AG04449 (cell line): ENCODE measurements at regions of chr2 and their contacts with region 1.

Region 1: GRCh38 chr2:190088917-190089316 is 26.4 kb upstream of the MSTN start:
- DNase-seq: peak; percentile 5
- H3K4me3 ChIP-seq: no peak overlapping the region
- CTCF ChIP-seq: peak; percentile 48

Region 2: GRCh38 chr2:189549449-189549832 is 539.5 kb before region 1 on chr2:
- CTCF ChIA-PET with region 1: no interaction called
- POLR2A ChIA-PET with region 1: no interaction called
- DNase-seq: no peak
- H3K4me3 ChIP-seq: no peak overlapping the region
- CTCF ChIP-seq: no peak

Region 3: GRCh38 chr2:190272457-190272842 is 183.5 kb after region 1 on chr2:
- CTCF ChIA-PET with region 1: interaction called, 48 read pairs
- POLR2A ChIA-PET with region 1: no interaction called
- DNase-seq: no peak
- H3K4me3 ChIP-seq: no peak overlapping the region
- CTCF ChIP-seq: no peak

Region 4: DNA sequence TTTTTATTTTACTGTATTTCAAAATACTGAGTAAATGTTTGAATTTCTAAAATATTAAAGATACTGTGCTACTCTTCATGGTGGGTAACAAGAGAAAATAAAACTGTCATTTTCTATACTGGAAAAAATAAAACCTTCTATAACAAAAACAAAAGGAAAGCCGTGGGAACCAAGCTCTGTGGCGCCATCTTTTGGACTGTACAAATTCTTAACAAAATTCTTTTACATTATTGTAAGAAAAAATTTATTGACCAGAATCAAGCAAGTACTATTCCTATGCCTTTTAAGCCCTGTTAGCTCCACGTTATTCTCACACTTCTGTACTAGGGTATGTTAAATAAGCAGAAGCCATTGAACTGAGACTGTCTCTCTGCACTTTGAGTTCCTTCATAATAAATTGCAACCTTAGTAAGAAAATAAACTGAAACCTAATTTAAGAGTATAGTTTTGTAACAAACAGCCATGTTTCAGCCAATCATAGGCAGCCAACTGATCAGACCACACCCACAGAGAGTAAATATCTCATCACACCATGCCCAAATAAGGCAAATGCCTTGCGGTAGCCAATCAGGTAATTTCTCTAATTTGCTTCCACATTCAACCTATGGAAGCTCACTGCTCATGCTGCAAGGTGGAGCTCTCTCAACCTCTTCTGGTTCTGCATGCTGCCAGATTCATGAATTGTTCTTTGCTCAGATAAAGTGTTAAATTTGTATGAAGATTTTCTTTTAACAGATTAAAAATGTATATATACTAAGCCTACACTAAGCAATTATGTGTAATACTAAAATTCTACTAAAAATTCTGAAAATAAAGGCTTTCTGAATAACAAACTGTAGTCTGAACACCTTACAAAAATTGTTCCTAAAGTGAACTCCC is 188.6 kb after region 1 on chr2:
- CTCF ChIA-PET with region 1: interaction called, 48 read pairs
- POLR2A ChIA-PET with region 1: no interaction called
- DNase-seq: no peak
- H3K4me3 ChIP-seq: no peak overlapping the region
- CTCF ChIP-seq: peak; percentile 38

Region 5: GRCh38 chr2:190308031-190308430 is 219.1 kb after region 1 on chr2:
- CTCF ChIA-PET with region 1: interaction called, 19 read pairs
- POLR2A ChIA-PET with region 1: no interaction called
- DNase-seq: no peak
- H3K4me3 ChIP-seq: no peak overlapping the region
- CTCF ChIP-seq: no peak

Region 6: DNA sequence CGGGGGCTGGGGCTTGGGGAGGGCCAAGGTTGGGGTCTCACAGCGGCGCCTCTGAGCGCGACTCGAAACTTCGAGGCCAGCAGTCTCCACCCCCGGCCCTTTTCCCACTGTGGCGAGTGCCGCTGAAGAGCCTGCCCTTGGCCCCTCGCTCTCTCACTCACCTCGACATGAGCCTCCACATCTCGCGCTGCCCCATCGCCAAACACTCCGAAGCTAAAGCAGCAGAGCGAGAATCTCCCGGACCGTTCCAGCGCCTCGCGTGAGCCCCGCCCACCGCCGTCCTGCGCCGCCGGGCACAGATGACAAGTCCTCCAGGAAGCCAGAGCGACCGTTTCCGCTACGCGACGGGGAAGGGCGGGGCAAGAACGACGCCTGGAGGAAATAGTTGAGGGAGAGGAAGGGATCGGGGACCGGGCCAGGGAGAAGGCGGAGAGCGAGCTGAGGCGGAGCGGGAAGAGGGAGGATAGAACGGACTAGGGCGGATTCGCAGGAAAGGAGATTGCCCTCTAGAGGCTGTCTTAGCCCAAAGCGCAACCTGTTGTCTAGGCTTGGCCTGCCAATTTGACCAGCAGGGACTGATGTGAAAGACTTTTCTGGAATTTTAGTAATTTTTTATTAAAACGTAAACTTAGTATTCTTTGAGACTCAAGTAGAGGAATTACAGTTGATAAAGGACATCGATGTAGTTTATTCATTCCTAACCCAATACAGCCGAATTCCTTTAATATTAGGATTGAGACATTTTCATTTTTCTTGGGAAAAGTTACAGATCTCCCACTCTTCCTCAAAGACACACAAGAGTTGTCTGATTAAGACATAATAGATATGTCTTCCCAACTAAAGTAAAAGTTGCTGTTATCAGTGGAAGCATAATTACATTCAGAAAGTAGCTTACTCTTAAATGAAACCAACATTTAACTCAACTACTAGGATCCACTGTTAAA is 230.9 kb after region 1 on chr2 and contains the start of gene HIBCH:
- CTCF ChIA-PET with region 1: interaction called, 10 read pairs
- POLR2A ChIA-PET with region 1: no interaction called
- DNase-seq: peak; percentile 86
- H3K4me3 ChIP-seq: peak within 1 kb of the TSS; percentile 78
- CTCF ChIP-seq: peak; percentile 91

Region 7: GRCh38 chr2:190511104-190511503 is 422.2 kb after region 1 on chr2:
- CTCF ChIA-PET with region 1: interaction called, 16 read pairs
- POLR2A ChIA-PET with region 1: no interaction called
- DNase-seq: no peak
- H3K4me3 ChIP-seq: no peak overlapping the region
- CTCF ChIP-seq: peak; percentile 26